ENCODE measurements at regions of chr2 and their contacts with region 1.

Region 1: GRCh38 chr2:38734299-38735058 is 16.7 kb downstream of the SRSF7 start:
- DNase-seq: no peak
- CTCF ChIP-seq: no peak

Region 2: DNA sequence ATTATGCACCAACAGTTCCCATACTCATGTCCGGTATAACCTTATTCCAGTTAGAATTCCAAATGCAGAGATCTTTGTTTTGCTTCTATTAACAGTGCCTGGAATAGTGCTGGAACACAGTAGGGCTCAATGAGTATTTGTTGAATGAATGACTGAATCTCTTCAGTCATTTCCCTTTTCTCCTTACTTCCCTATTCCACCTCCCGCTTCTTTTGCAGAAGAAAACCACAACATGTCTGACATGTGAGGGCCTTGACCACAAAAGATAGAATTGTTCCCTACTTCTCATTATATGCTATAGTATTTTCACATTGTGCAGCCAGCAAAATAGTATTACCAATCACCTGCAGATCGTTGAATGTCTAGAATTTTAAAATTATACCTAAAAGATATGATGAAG is 112.3 kb before region 1 on chr2:
- CTCF ChIA-PET with region 1: no interaction called
- POLR2A ChIA-PET with region 1: no interaction called
- DNase-seq: no peak
- CTCF ChIP-seq: no peak

Region 3: DNA sequence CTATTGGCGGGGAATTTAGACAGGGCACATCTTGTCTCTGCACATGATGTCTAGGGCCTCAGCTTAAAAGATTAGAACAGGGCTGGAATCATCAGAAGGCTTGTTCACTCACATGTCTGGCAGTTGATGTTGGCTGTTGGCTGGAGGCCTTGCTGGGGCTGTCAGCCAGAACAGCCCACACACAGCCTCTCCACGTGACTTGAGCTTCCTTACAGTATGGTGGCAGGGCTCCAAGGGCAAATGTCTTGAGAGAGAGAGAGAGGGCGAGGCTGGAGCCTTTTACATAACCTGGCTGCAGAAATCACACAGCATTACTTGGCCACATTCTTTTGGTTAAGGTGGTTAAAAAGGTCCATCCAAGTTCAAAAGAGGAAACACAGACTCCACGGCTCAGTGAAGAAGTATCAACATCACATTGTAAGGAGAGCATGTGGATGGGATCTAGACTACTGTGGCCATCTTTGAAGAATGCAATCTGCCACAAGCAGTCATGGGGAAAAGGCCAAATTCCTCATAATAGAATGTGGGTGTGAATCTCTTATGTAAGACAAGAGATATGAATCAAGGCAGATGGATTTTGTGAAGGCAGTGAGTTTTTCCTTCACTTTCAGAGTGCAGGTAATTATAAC is 13.8 kb before region 1 on chr2:
- CTCF ChIA-PET with region 1: interaction called, 7 read pairs
- POLR2A ChIA-PET with region 1: interaction called, 10 read pairs
- DNase-seq: no peak
- CTCF ChIP-seq: no peak